ENCODE measurements at regions of chr16 and their contacts with region 1.

Region 1: GRCh38 chr16:46721885-46722284 is 26.3 kb downstream of the MYLK3 start:
- DNase-seq: no peak
- ATAC-seq: no peak
- H3K4me3 ChIP-seq: no peak overlapping the region
- H3K27ac ChIP-seq: no peak overlapping the region
- H3K4me1 ChIP-seq: no peaks in the 10 kb centered on the region
- H3K27me3 ChIP-seq: no peaks in the 10 kb centered on the region
- CTCF ChIP-seq: no peak

Region 2: GRCh38 chr16:46404048-46404447 is 317.8 kb before region 1 on chr16:
- intact Hi-C with region 1: no loop called
- DNase-seq: no peak
- ATAC-seq: no peak
- H3K4me3 ChIP-seq: no peak overlapping the region
- H3K27ac ChIP-seq: no peak overlapping the region
- H3K4me1 ChIP-seq: no peaks in the 10 kb centered on the region
- H3K27me3 ChIP-seq: no peaks in the 10 kb centered on the region
- CTCF ChIP-seq: no peak

Region 3: GRCh38 chr16:46920402-46921068 is 198.7 kb after region 1 on chr16:
- intact Hi-C with region 1: loop called (anchors 5 kb)
- DNase-seq: no peak
- ATAC-seq: peak; percentile 71
- H3K4me3 ChIP-seq: no peak overlapping the region
- H3K27ac ChIP-seq: no peak overlapping the region
- H3K4me1 ChIP-seq: no peaks in the 10 kb centered on the region
- H3K27me3 ChIP-seq: no peaks in the 10 kb centered on the region
- CTCF ChIP-seq: no peak

Measured in upper lobe of right lung (tissue), 1 donor.